Activated T-helper 2 cell treated with anti-CD3 and anti-CD28 coated beads, Interferon-gamma antibody, Interleukin-2, Interleukin-4, amounts not matched to agents 10 μg/mL and 5 μg/mL and 100 μg/mL, durations not matched to agents 14 hours and 24 hours and 36 hours (primary cell): ENCODE measurements at regions of chr4 and their contacts with region 1.

Region 1: GRCh38 chr4:99563310-99564186 is at the start of gene TRMT10A:
- DNase-seq: peak; percentile 93
- H3K4me3 Mint-ChIP-seq: peak within 1 kb of the TSS; percentile 92
- H3K27ac Mint-ChIP-seq: peak within 1 kb of the TSS; percentile 95
- H3K4me1 Mint-ChIP-seq: peaks cover 12% of the 10 kb centered on the region
- H3K27me3 Mint-ChIP-seq: peaks cover 16% of the 10 kb centered on the region
- total RNA-seq, gene TRMT10A: 7.9 and 8.4 TPM in 2 replicates

Region 2: DNA sequence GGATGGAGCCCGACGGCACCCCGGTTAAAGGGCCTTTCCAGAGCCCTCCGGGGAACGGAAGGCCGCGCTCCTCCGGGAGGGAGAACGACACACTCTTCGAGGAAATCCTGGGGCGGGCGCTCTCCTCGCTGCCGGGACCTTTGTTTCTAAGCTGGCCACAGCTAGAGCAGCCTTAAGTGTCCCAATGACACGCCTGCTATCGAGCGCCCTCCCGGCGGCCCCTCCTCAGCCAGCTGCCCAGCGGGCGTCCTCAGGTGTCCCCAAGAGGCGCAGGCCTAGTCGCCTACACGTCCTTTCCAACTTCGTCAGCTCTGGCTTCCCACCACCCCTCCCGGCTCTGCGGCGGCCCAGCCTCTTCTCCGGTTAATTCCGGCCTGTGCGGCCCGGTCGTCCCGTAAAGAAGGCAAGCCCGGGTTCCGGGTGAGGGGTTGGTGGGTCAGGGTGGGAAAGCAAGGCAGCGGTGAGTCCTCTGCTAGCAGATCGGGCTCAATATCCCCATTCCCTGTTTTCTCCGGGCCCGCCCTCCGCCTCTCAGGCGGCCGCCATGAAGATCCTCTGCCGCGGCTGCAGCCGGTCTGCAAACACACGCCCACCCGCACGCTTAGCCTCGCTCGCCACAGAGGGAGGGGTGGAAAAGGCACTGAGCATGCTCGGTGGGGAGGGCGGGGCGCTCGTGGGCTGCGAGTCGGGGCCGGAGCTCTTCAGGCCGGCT is 1302.8 kb before region 1 on chr4:
- intact Hi-C with region 1: loop called (anchors 5 kb)
- DNase-seq: peak; percentile 89
- H3K4me3 Mint-ChIP-seq: peak overlapping the region; percentile 95
- H3K27ac Mint-ChIP-seq: peak overlapping the region; percentile 98
- H3K4me1 Mint-ChIP-seq: peaks cover 44% of the 10 kb centered on the region
- H3K27me3 Mint-ChIP-seq: no peaks in the 10 kb centered on the region

Region 3: DNA sequence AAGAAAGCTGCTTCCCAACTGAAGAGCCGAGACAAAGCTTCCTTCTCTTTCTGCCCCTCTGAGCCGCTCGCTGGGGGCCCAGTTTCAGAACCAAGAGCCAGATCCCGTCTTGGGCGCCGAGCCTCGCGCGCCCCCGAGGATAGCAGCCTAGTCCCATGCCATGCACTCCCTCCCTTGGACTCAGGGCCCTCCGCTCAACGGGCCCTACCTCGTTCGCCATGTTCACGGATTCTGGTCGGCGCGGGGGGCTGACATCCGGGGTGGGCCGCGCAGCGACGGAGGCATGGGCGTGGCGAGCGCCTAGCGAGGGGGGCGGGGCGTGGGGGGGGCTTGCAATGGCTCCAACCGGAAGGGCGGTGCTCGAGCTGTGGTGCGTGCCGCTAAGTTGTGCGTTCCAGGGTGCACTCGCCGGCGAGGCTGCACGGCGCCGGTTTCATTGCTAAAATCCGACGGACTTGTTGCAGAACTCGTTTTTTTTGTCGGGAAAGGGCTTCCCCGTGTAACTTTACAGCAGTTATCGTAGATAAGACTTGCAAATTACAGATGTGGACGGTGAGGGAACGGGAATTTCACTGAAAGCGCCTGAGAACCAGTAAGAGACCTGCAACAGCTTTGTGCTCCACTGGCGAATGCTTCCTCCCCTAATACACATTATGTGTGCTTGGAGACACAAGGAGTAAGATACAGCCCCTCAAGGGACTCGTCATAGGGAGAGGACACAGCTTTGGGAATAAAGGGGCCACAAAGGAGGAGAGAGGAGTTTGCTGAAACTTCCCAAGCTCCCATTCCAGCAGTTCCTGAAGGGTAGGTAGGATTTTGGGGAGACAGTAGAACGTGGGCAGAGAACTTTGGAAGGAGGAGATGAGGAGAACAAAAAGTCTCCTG is 474.8 kb before region 1 on chr4 and contains the start of gene ADH5:
- intact Hi-C with region 1: loop called (anchors 5 kb)
- DNase-seq: peak; percentile 80
- H3K4me3 Mint-ChIP-seq: peak within 1 kb of the TSS; percentile 95
- H3K27ac Mint-ChIP-seq: peak within 1 kb of the TSS; percentile 92
- H3K4me1 Mint-ChIP-seq: peaks cover 26% of the 10 kb centered on the region
- H3K27me3 Mint-ChIP-seq: peaks cover 4% of the 10 kb centered on the region
- total RNA-seq, gene ADH5: 93.8 and 98.6 TPM in 2 replicates

Region 4: DNA sequence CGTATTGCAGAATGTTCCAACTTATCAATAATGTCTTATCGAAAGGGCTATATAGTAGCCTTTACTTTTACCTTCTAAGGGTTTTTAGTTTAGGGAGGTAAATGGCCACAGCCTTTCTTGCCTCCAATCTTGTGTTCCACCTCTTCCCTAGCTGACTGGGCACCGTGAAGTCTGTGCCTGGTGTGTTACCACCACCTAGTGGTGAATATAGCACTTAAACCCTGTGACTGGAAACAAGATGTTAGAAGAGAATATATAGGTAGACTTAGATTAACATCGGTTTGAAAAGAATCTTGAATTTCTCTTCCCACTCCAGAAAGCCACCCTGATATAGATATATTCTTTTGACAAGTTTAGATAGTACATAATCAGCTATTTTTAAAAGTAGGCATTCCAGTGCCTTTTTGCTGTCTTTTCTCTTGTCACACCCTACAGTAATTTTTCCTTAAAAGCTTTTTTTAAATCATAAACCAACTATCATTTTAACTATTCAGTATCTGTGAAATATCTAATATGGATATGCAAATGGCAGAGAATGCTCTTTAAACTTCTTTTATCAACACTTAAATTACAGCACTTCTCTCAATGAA is 100.6 kb before region 1 on chr4:
- intact Hi-C with region 1: no loop called
- DNase-seq: peak; percentile 23
- H3K4me3 Mint-ChIP-seq: no peak overlapping the region
- H3K27ac Mint-ChIP-seq: no peak overlapping the region
- H3K4me1 Mint-ChIP-seq: no peaks in the 10 kb centered on the region
- H3K27me3 Mint-ChIP-seq: peaks cover 29% of the 10 kb centered on the region

Region 5: GRCh38 chr4:99755223-99755944 is 191.8 kb after region 1 on chr4:
- intact Hi-C with region 1: loop called (anchors 2 kb)
- DNase-seq: no peak
- H3K4me3 Mint-ChIP-seq: no peak overlapping the region
- H3K27ac Mint-ChIP-seq: no peak overlapping the region
- H3K4me1 Mint-ChIP-seq: peaks cover 21% of the 10 kb centered on the region
- H3K27me3 Mint-ChIP-seq: peaks cover 3% of the 10 kb centered on the region

Region 6: DNA sequence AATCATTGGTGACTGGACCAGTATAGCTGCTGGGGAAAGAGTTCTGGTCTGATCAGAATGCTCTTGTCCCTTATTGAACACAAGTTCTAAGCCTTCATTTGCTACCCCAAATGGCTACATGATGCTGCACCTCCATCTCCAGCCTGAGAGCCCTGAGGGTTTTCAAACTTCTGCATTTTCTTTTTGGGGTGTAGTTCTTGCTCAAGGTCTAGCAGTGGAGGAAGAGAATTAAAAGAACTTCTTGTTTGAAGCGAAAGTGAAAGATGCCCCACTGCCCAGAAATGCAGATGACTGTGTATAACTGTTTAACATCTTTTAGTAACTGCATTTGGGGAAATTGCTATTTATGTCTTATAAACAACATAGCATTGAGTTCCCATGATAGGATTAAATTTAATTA is 292.1 kb after region 1 on chr4:
- intact Hi-C with region 1: loop called (anchors 2 kb)
- DNase-seq: no peak
- H3K4me3 Mint-ChIP-seq: peak overlapping the region; percentile 3
- H3K27ac Mint-ChIP-seq: peak overlapping the region; percentile 83
- H3K4me1 Mint-ChIP-seq: peaks cover 68% of the 10 kb centered on the region
- H3K27me3 Mint-ChIP-seq: no peaks in the 10 kb centered on the region

Region 7: DNA sequence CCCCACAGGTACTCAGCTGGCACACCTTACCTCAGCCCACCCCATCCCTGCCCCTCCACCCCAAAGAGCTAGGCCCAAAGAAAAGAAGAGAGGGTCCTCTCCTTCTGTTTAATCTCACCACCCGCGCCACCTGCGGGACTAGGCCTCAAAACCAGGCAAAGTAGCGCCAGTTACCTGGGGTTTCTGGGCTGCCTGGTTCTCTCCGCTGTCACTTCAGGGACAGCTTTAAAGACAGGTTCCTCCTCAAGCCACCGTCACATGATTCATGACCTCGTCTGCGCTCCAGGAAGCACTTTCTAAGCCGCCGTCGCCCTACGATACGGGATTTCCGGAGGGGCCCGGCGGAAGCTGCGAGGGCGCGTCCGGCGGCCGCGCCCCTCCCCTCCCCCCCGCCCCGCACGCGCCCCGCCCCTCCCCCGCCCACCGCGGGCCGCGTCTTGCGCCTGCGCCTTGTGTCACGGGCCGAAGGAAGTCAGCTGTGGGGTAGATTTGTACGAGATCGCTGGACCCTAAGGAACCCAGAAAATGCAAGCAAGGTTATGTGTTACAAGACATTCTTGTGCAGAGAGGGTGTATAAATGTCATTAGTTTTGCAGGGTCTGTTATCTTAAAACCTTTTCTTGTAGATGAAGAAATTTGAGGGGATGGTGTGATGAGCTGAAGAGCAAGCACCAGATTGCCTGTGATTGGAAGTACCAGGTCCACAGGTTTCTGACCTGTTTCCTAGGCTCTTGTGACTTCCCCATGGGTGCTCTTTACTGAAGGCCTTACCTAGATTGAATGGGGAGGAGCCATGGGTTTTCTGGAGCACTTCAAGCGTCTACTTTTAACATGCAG is 330.8 kb after region 1 on chr4 and contains the start of gene LAMTOR3:
- intact Hi-C with region 1: loop called (anchors 1 kb)
- DNase-seq: peak; percentile 87
- H3K4me3 Mint-ChIP-seq: peak within 1 kb of the TSS; percentile 98
- H3K27ac Mint-ChIP-seq: peak within 1 kb of the TSS; percentile 95
- H3K4me1 Mint-ChIP-seq: peaks cover 27% of the 10 kb centered on the region
- H3K27me3 Mint-ChIP-seq: no peaks in the 10 kb centered on the region
- total RNA-seq, gene LAMTOR3: 27.1 and 28.8 TPM in 2 replicates

Region 8: DNA sequence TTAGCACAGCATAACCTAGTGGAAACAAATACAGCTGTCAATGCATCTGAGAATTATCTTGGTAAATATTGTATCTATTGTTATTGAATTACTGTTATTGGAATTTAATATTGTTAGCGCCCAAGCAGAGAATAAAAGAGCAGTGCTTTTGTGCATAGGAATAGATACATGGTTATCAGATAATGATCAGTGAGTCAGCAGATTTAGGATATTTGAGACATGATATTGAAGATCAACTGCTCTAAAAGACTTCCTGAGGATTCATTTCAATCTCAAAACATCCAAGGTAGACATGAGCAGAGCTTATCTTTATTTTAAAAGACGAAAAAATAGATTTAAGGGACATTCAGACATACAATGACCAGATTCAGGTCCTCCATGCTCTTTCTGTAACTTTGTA is 397.1 kb after region 1 on chr4:
- intact Hi-C with region 1: no loop called
- DNase-seq: no peak
- H3K4me3 Mint-ChIP-seq: no peak overlapping the region
- H3K27ac Mint-ChIP-seq: no peak overlapping the region
- H3K4me1 Mint-ChIP-seq: peaks cover 15% of the 10 kb centered on the region
- H3K27me3 Mint-ChIP-seq: peaks cover 4% of the 10 kb centered on the region

Region 9: GRCh38 chr4:100462206-100462605 is 898.7 kb after region 1 on chr4:
- intact Hi-C with region 1: no loop called
- DNase-seq: no peak
- H3K4me3 Mint-ChIP-seq: no peak overlapping the region
- H3K27ac Mint-ChIP-seq: no peak overlapping the region
- H3K4me1 Mint-ChIP-seq: peaks cover 10% of the 10 kb centered on the region
- H3K27me3 Mint-ChIP-seq: peaks cover 2% of the 10 kb centered on the region